OCI-LY7 (cell line): ENCODE measurements at regions of chr1 and their contacts with region 1.

Region 1: DNA sequence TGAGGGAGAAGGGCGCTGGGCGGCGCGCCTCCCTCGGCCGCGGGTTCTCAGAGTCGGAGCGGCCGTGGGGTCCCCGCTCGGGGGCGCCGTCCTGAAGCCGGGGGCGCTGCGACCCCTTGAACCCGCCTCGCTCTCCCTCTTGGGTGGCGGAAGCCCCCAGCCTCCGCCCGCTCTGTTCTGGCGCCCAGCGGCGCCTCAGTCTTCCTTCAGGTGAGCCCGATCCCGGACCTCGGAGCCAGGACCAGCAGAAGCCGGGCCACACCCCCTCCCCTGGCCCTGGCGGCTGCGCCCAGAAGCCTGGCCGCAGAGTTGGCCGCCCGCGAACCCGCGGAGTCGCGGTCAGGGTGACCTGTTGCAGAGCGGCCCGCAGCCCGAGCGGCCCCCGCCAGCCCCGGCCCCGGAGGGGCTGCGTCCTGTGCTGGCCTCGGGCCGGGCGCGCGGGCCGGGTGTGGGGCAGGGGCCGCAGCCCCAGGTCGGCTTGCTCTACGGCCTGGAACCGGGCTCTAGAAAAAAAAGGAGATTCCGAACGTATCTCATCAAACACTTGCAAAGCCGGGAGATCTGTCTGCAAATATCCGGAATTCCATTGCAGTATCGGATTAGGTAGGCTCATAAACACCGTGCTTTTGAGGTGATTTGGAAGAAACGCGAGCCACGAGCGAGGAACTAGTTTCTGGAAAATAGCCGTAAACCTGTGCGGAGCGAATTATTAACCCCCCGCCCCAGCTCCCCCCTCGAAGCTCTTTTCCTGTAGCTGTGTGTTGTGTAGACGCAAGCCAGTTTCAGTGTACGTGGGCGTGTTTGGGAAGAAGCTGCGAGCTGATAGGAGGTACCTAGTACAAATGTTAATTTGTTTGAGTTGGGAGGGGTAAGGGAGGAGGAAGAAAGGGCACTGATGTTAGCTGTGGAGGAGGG is 816 bp downstream of the RALGPS2 start:
- DNase-seq: peak; percentile 95
- H3K4me3 ChIP-seq: peak overlapping the region; percentile 92
- H3K27ac ChIP-seq: peak overlapping the region; percentile 84
- H3K4me1 ChIP-seq: peaks cover 32% of the 10 kb centered on the region
- CTCF ChIP-seq: peak; percentile 58

Region 2: GRCh38 chr1:178575611-178576331 is 150.1 kb before region 1 on chr1:
- CTCF ChIA-PET with region 1: interaction called, 10 read pairs
- POLR2A ChIA-PET with region 1: interaction called, 108 read pairs
- intact Hi-C with region 1: no loop called
- DNase-seq: peak; percentile 83
- H3K4me3 ChIP-seq: peak overlapping the region; percentile 67
- H3K27ac ChIP-seq: peak overlapping the region; percentile 99
- H3K4me1 ChIP-seq: peaks cover 91% of the 10 kb centered on the region
- CTCF ChIP-seq: no peak

Region 3: GRCh38 chr1:178607718-178608408 is 118.0 kb before region 1 on chr1:
- CTCF ChIA-PET with region 1: interaction called, 5 read pairs
- POLR2A ChIA-PET with region 1: interaction called, 47 read pairs
- intact Hi-C with region 1: loop called (anchors 1 kb)
- DNase-seq: peak; percentile 45
- H3K4me3 ChIP-seq: no peak overlapping the region
- H3K27ac ChIP-seq: peak overlapping the region; percentile 98
- H3K4me1 ChIP-seq: peaks cover 74% of the 10 kb centered on the region
- CTCF ChIP-seq: no peak

Region 4: GRCh38 chr1:178629252-178630154 is 96.4 kb before region 1 on chr1:
- CTCF ChIA-PET with region 1: no interaction called
- POLR2A ChIA-PET with region 1: no interaction called
- intact Hi-C with region 1: no loop called
- DNase-seq: no peak
- H3K4me3 ChIP-seq: no peak overlapping the region
- H3K27ac ChIP-seq: no peak overlapping the region
- H3K4me1 ChIP-seq: no peaks in the 10 kb centered on the region
- CTCF ChIP-seq: no peak

Region 5: GRCh38 chr1:178749581-178750166 is 23.8 kb after region 1 on chr1:
- CTCF ChIA-PET with region 1: interaction called, 4 read pairs
- POLR2A ChIA-PET with region 1: interaction called, 9 read pairs
- intact Hi-C with region 1: loop called (anchors 2 kb)
- DNase-seq: no peak
- H3K4me3 ChIP-seq: peak overlapping the region; percentile 40
- H3K27ac ChIP-seq: peak overlapping the region; percentile 71
- H3K4me1 ChIP-seq: peaks cover 47% of the 10 kb centered on the region
- CTCF ChIP-seq: no peak

Region 6: DNA sequence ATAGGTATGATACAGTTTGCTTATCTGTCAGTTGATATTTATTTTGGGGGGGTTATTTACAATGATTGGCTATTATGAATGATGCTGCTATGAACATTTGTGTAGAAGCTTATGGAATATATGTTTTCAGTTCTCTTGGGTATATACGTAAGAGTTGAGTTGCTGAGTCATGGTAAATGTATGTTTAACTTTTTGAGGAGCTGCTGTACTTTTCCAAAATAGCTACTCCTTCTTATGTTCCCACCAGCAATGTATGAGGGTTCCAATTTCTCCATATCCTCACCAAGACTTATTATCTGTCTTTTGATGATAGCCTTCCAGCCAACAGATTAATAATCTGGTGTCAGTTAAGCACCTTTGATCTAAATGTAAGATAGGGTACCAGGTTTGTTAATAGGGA is 579.6 kb after region 1 on chr1:
- CTCF ChIA-PET with region 1: no interaction called
- POLR2A ChIA-PET with region 1: no interaction called
- intact Hi-C with region 1: no loop called
- DNase-seq: no peak
- H3K4me3 ChIP-seq: no peak overlapping the region
- H3K27ac ChIP-seq: no peak overlapping the region
- H3K4me1 ChIP-seq: no peaks in the 10 kb centered on the region
- CTCF ChIP-seq: no peak

Region 7: DNA sequence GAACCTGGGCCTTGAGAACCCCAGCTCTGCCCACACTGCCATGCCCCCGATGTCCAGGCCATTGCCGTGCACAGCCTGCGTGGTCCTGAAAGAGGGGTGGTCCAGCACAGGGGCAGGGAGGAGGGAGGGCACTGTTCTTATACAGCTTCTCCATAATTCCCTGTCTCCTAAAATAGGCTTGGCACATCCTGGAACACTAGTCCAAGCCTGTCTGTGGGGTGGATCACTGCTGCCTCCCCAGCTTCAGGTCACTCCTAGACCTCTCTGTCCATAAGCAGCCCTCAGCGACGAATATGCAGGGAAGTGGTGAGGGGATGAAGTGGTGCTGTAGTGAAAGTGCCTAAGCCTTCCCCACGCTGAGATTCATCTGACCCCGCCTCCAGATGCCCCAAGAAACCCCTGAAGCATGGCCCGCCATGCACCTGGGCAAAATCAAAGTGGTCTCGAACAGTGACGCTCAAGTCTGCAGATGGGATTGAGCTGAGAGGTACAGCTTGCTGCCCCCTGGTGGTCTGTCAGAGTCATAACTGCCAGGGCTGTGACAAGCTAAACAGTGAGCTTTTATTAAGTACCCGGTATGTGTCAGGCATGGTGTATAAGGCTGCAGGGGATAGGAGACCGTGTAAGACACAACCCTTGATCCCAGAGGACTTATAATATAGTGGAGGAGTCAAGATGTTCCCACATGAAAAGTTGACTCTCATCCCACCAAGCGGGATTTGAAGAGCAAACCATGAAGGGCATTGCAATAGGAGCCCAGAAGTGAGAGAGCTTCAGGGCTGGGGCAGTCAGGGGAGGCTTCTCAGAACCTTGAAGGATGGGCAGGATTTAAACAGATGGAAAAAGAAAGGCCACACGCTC is 1083.9 kb after region 1 on chr1:
- CTCF ChIA-PET with region 1: no interaction called
- POLR2A ChIA-PET with region 1: no interaction called
- intact Hi-C with region 1: no loop called
- DNase-seq: peak; percentile 81
- H3K4me3 ChIP-seq: no peak overlapping the region
- H3K27ac ChIP-seq: no peak overlapping the region
- H3K4me1 ChIP-seq: peaks cover 4% of the 10 kb centered on the region
- CTCF ChIP-seq: peak; percentile 94